ENCODE measurements at regions of chr20 and their contacts with region 1.

Region 1: DNA sequence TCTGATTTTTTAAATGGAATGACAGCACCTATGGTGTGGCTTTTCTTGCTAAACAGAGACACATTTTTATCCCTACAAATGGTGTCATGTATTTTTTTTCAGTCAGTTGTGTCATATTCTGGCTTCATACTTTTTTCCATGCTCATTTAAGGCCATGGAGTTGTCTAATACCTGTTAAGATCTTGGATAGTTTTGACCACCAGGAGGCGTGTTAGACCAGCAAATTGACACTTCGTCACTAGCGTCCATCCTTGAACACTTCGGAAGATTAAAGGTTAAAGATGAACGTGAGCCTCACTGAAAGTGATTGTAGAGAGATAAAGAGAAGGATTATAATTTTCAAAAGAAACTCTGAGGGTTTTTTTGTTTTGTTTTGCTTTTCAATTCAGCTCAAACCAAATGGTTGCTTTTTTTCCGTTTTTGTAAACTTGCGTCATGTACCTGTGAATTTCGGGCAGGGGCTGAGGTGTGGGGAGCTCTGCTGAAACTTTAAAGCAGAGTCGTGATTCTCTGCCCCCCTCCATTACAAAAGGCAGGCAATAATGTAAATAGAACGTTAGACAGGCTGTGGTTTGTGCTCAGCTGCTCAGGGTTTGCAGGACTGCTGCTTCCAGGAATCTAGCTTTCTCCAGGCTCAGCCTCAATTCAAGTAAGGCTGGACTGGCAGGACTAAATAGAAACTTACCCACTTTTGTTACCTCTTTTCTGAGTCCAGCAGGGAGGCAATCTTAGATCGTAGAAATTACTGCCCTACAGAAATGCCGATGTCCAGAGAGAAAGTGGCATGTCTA is 245.1 kb downstream of the FOXA2 start:
- DNase-seq: no peak
- H3K4me3 Mint-ChIP-seq: no peak overlapping the region
- H3K27ac Mint-ChIP-seq: no peak overlapping the region
- H3K4me1 Mint-ChIP-seq: no peaks in the 10 kb centered on the region
- H3K27me3 Mint-ChIP-seq: peaks cover 3% of the 10 kb centered on the region

Region 2: DNA sequence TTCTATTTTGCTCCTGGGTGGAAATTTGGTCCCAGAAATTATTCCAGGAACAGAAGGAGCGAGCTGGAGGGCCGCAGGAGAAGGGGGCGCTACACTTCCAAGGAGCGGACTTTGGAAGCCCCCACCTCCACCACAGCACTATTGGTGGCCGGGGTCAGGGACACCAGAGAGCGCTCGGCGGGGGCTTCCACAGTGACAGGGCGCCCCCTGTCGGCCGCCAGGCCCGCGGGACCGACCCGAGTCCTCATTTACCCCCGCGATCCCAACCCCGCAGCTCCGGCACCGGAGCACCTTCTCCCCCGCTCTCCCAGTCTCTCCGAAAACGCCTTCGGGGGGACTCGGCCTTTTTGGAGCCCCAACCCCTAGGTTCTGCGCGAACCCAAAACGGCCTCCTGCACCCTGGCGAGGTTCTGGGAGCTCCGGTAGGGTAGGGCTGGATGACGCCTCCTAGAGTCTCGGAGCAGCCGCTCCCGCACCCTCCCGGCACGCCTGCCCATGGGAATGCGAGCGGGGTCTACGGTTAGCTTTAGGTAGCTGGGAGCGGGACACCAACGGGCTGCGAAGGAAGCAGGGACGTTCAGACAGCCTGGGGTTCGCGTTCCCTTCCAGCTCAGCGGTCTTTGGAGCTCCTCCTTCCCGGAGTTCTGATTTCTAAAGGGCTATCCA is 247.5 kb after region 1 on chr20:
- intact Hi-C with region 1: loop called (anchors 2 kb)
- DNase-seq: no peak
- H3K4me3 Mint-ChIP-seq: no peak overlapping the region
- H3K27ac Mint-ChIP-seq: no peak overlapping the region
- H3K4me1 Mint-ChIP-seq: no peaks in the 10 kb centered on the region
- H3K27me3 Mint-ChIP-seq: peaks cover 36% of the 10 kb centered on the region

Region 3: GRCh38 chr20:23340524-23340923 is 1001.2 kb after region 1 on chr20:
- intact Hi-C with region 1: loop called (anchors 5 kb)
- DNase-seq: no peak
- H3K4me3 Mint-ChIP-seq: no peak overlapping the region
- H3K27ac Mint-ChIP-seq: no peak overlapping the region
- H3K4me1 Mint-ChIP-seq: peaks cover 11% of the 10 kb centered on the region
- H3K27me3 Mint-ChIP-seq: peaks cover 12% of the 10 kb centered on the region